Prostate gland (tissue), 2 donors: ENCODE measurements at regions of chr9 and their contacts with region 1.

Region 1: GRCh38 chr9:122810306-122810946 is 10.5 kb downstream of the OR1K1 start:
- DNase-seq: peak; percentile 72
- H3K4me3 ChIP-seq: no peak overlapping the region
- H3K27ac ChIP-seq: no peak overlapping the region
- H3K4me1 ChIP-seq: no peaks in the 10 kb centered on the region
- H3K27me3 ChIP-seq: no peaks in the 10 kb centered on the region
- CTCF ChIP-seq: peak; percentile 56 to 90 (median 84)
- POLR2A ChIP-seq: no peak

Region 2: GRCh38 chr9:122092611-122093506 is 717.6 kb before region 1 on chr9 and contains the start of gene TTLL11:
- intact Hi-C with region 1: loop called (anchors 10 kb)
- DNase-seq: peak; percentile 97
- H3K4me3 ChIP-seq: peak within 1 kb of the TSS; percentile 83 to 90
- H3K27ac ChIP-seq: peak within 1 kb of the TSS; percentile 31 to 59
- H3K4me1 ChIP-seq: peaks cover 4% of the 10 kb centered on the region
- H3K27me3 ChIP-seq: no peaks in the 10 kb centered on the region
- CTCF ChIP-seq: peak in 1 of 4 experiments; percentile 17
- POLR2A ChIP-seq: peak; percentile 31
- total RNA-seq, gene TTLL11: 11.7 to 11.9 TPM

Region 3: DNA sequence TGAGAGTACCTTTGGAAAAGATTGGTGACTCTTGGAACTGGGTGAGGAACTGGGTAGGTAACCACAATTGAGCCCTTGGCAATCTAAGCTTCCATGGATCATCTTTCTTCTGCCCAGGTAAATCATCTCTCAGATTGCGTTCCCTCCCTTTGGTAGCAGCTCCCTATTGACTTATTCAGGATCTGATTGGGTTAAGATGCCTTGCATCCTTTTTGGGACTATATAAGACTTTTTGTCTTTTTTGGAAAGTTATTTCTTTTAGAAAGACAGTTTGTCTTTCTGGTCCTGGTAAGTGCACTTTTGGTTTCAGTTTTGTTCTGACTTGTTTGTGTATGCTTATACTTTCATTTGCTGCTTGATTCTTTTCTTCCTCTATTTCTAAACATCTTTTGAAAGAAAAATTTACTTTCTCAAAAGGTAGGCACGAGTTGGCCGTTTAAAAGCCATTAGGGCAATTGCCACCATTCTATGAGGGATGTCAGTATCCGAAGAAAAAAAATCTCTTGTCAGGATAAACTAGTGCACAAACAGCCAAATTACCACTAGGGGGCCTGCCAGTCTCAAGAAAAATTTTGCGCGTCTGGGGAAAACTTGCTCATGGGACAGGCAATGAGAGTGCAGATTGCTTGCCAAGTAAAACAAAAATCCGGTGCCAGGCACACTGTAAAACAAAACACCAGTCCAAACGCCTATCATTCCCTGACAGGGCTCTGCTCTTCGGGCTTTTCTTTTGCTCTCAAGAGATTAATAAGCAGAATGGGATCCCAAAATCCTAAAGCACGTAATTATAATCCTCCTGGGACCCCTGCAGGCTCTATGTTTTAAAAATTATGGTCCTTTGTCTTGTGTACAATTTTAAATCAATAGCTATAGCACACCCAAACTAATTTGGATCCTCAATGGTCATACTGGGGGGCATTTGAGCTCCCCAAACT is 345.5 kb before region 1 on chr9:
- intact Hi-C with region 1: loop called (anchors 2 kb)
- DNase-seq: peak; percentile 92
- H3K4me3 ChIP-seq: peak overlapping the region; percentile 17 to 18
- H3K27ac ChIP-seq: peak overlapping the region in 1 of 2 donors; percentile 21
- H3K4me1 ChIP-seq: no peaks in the 10 kb centered on the region
- H3K27me3 ChIP-seq: no peaks in the 10 kb centered on the region
- CTCF ChIP-seq: peak; percentile 48 to 96 (median 90)
- POLR2A ChIP-seq: no peak